Right ventricle myocardium inferior (tissue), 1 donor: ENCODE measurements at regions of chr1 and their contacts with region 1.

Region 1: DNA sequence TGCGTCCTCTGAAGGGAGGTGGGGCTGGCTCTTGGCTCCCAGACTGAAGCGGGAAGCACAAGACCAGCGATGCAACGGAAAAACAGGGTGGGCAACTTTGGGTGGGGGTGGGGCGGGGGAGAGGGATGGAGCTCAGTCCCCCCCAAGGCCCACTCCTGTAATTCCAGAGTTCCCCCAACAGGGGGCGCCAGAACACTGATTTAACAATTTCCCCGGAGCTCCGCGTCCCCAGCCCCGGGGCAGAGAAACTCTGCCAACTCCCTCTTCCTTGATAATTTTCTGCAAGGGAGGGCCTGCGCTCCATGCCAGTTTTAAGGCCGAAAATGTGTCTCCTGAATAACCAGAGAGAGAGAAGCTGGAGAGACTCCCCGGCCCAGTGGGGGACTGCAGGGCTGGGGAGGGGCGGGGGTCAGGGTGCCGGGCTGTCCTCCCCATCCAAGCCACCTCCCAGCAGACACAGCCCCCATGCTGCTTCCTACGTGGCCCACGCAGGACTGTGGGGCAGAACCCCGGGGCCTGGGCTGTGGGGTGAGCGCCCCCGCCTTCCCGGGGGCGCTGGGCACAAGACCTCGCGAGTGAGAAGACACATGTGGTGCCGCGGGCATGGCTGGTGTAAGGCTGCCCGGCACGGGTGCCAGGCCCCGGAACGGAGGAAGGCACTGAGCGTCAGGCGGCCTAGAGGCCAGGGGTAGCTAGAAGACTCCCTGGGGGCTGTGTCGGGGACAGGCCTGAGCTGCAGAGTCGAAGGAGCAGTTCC is 51.4 kb downstream of the KIF21B start:
- DNase-seq: peak; percentile 82
- ATAC-seq: no peak

Region 2: DNA sequence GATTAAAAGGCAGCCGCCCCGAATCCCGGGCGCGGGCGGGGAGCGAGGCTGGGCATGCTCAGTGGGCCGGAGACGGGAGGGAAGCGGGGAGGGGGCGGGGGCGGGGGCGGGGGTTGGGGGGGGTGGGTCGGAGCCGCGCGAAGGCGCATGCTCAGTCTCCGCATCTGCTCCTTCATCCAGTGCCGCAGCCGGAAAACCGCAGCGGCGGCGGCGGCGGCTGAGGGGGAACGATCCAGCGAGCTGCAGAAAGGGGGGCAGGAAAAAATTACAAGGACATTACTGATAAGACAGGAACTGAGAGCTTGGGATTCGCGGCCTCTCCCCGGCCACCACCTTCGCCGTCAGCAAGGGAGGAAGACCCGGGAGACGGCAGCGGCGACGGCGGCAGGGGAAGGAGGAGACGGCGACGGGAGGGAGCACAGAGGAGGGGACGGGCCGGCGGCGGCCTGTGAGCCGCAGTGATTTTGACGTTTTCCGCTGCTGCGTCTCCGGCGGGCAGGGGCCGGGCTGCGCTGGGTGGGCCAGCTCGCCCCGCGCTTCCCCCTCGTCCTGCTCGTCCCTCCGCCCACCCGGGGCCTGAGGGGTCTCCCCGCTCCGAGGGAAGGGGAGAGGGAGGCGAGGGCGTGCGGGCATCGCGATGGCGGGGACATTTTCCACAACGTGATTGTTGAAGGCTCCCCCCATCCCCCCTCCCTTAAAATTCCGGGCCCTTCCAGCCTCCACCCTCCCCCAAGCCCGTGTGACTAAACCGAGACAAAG is 233.2 kb before region 1 on chr1 and contains the start of gene CAMSAP2:
- intact Hi-C with region 1: no loop called
- DNase-seq: peak; percentile 93
- ATAC-seq: peak; percentile 92
- total RNA-seq, gene CAMSAP2: 37.4 TPM

Region 3: DNA sequence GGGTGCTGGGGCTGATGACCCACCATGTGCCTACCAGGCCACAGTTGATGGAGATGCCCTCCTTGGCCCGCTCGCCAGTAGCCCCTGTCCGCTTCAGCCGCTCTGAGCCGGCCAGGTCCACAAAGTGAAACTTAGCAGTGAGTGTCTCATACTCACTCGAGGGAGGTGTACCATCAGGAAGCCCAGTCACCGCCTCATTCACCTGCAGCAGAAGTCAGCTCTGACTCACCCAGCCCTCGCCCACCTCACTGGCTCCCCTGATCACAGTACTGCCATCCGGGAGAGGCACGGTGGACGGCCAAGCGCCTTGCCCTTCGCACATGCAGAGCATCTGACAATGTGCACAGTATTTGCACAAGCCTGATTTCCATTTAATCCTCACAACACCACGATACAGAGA is 32.6 kb after region 1 on chr1:
- intact Hi-C with region 1: no loop called
- DNase-seq: no peak
- ATAC-seq: no peak

Region 4: GRCh38 chr1:201023517-201023902 is 51.4 kb after region 1 on chr1 and contains the start of gene KIF21B:
- intact Hi-C with region 1: loop called (anchors 5 kb)
- DNase-seq: peak; percentile 93
- ATAC-seq: peak; percentile 89
- total RNA-seq, gene KIF21B: 0.43 TPM

Region 5: GRCh38 chr1:201042779-201043461 is 70.8 kb after region 1 on chr1:
- intact Hi-C with region 1: loop called (anchors 1 kb)
- DNase-seq: peak; percentile 76
- ATAC-seq: peak; percentile 71

Region 6: GRCh38 chr1:201113451-201114235 is 141.5 kb after region 1 on chr1:
- intact Hi-C with region 1: loop called (anchors 1 kb)
- DNase-seq: no peak
- ATAC-seq: no peak

Region 7: GRCh38 chr1:201125019-201125418 is 152.9 kb after region 1 on chr1:
- intact Hi-C with region 1: no loop called
- DNase-seq: peak; percentile 57
- ATAC-seq: no peak

Region 8: DNA sequence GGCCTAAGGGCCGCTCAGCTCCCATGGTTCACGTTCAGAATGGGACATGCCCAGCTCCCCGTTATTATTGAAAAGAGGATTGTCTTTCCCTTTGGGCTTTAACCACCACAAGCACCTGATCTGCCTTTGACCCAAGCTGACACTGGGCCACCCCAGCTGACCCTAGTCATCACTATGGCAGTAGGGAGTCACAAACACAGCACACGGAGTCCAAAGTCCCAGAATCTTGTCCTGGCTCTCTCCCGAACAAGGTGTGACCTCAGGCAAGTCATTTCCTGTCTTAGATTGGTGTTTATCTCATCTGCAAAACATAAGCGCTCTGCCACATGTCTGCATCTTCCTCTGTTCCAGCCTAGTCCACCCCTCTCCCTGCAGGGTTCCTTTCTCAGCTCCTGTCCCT is 250.0 kb after region 1 on chr1:
- intact Hi-C with region 1: loop called (anchors 2 kb)
- DNase-seq: no peak
- ATAC-seq: no peak